Calu3 (cell line): ENCODE measurements at regions of chr16 and their contacts with region 1.

Region 1: GRCh38 chr16:352547-353403 is at the start of gene AXIN1:
- DNase-seq: peak; percentile 100
- H3K4me3 Mint-ChIP-seq: peak within 1 kb of the TSS; percentile 71
- H3K27ac Mint-ChIP-seq: peak within 1 kb of the TSS; percentile 36
- H3K4me1 Mint-ChIP-seq: peaks cover 15% of the 10 kb centered on the region
- H3K27me3 Mint-ChIP-seq: no peaks in the 10 kb centered on the region
- CTCF ChIP-seq: peak; percentile 71
- total RNA-seq, gene AXIN1: 49.8 and 52.5 TPM in 2 replicates

Region 2: GRCh38 chr16:106623-107324 is 246.0 kb before region 1 on chr16:
- CTCF ChIA-PET with region 1: interaction called, 13 read pairs
- intact Hi-C with region 1: no loop called
- DNase-seq: peak; percentile 66
- H3K4me3 Mint-ChIP-seq: no peak overlapping the region
- H3K27ac Mint-ChIP-seq: no peak overlapping the region
- H3K4me1 Mint-ChIP-seq: no peaks in the 10 kb centered on the region
- H3K27me3 Mint-ChIP-seq: no peaks in the 10 kb centered on the region
- CTCF ChIP-seq: peak; percentile 88

Region 3: DNA sequence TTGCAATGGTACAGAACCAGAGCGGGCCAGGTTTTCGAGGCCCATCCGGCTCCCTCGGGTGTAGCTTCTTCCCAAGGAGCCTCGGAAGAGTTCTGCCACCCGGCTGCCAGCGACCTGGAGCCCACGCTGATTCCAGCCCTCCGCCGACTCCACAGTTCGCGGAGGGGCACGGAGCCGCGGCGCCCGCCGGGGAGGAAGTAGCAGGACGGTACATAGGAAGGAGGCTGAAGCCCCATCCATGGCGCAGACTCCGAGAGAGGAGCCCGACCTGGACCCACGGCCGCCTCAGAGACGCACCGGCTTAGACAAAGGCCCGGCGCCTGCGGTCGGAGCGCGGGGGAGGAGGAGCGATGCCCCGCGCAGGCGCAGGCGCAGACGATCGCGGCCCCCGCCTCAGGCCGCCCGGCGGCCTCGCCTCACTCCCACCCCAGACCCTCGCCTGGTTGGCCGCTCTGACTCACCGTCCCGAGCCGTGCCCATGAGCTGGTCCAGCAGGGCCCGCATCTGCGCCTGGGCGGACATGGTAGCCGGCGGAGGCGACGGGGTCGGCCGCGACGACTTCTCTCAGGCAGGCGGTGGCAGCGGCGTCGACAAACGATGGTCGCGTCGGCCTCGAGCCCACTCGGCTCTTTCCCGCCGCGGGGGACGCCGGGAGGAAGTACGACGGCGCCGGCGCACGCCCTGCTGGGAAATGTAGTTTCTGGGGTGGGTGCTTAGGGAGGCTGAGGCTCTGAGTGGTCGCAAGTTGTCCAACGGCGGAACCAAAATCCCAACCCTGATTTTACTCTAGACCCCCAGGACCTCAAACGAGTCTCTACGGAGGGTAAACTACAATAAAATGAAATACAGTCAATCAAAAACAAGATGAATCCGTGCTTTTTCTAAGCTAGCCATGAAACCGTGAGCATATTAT is 123.7 kb before region 1 on chr16 and contains the start of gene LUC7L:
- CTCF ChIA-PET with region 1: interaction called, 14 read pairs
- intact Hi-C with region 1: no loop called
- DNase-seq: peak; percentile 93
- H3K4me3 Mint-ChIP-seq: peak within 1 kb of the TSS; percentile 94
- H3K27ac Mint-ChIP-seq: peak within 1 kb of the TSS; percentile 87
- H3K4me1 Mint-ChIP-seq: peaks cover 10% of the 10 kb centered on the region
- H3K27me3 Mint-ChIP-seq: no peaks in the 10 kb centered on the region
- CTCF ChIP-seq: no peak
- total RNA-seq, gene LUC7L: 74.6 and 79.3 TPM in 2 replicates

Region 4: GRCh38 chr16:234468-235305 is 118.1 kb before region 1 on chr16 and contains the start of gene FAM234A:
- CTCF ChIA-PET with region 1: interaction called, 18 read pairs
- intact Hi-C with region 1: no loop called
- DNase-seq: peak; percentile 98
- H3K4me3 Mint-ChIP-seq: peak within 1 kb of the TSS; percentile 90
- H3K27ac Mint-ChIP-seq: peak within 1 kb of the TSS; percentile 93
- H3K4me1 Mint-ChIP-seq: no peaks in the 10 kb centered on the region
- H3K27me3 Mint-ChIP-seq: no peaks in the 10 kb centered on the region
- CTCF ChIP-seq: peak; percentile 65
- total RNA-seq, gene FAM234A: 118 and 130 TPM in 2 replicates

Region 5: GRCh38 chr16:525520-526180 is 172.9 kb after region 1 on chr16:
- CTCF ChIA-PET with region 1: no interaction called
- intact Hi-C with region 1: no loop called
- DNase-seq: peak; percentile 47
- H3K4me3 Mint-ChIP-seq: peak overlapping the region; percentile 92
- H3K27ac Mint-ChIP-seq: peak overlapping the region; percentile 53
- H3K4me1 Mint-ChIP-seq: peaks cover 38% of the 10 kb centered on the region
- H3K27me3 Mint-ChIP-seq: no peaks in the 10 kb centered on the region
- CTCF ChIP-seq: no peak